Activated CD4-positive, alpha-beta memory T cell treated with anti-CD3 and anti-CD28 coated beads for 36 hours (primary cell): ENCODE measurements at regions of chr10 and their contacts with region 1.

Region 1: GRCh38 chr10:86888585-86889381 is 68.6 kb downstream of the MMRN2 start:
- DNase-seq: no peak
- H3K4me3 Mint-ChIP-seq: no peak overlapping the region
- H3K27ac Mint-ChIP-seq: peak overlapping the region; percentile 28
- H3K4me1 Mint-ChIP-seq: peaks cover 10% of the 10 kb centered on the region
- H3K27me3 Mint-ChIP-seq: no peaks in the 10 kb centered on the region

Region 2: GRCh38 chr10:86827639-86828038 is 61.1 kb before region 1 on chr10:
- CTCF ChIA-PET with region 1: no interaction called
- POLR2A ChIA-PET with region 1: no interaction called
- intact Hi-C with region 1: loop called (anchors 2 kb)
- DNase-seq: no peak
- H3K4me3 Mint-ChIP-seq: no peak overlapping the region
- H3K27ac Mint-ChIP-seq: no peak overlapping the region
- H3K4me1 Mint-ChIP-seq: no peaks in the 10 kb centered on the region
- H3K27me3 Mint-ChIP-seq: no peaks in the 10 kb centered on the region